AG04449 (cell line): ENCODE measurements at regions of chr11 and their contacts with region 1.

Region 1: GRCh38 chr11:114348200-114349191 is 51.8 kb downstream of the C11orf71 start:
- DNase-seq: no peak
- H3K4me3 ChIP-seq: no peak overlapping the region
- CTCF ChIP-seq: peak; percentile 39

Region 2: GRCh38 chr11:114362326-114362725 is 13.8 kb after region 1 on chr11:
- CTCF ChIA-PET with region 1: interaction called, 19 read pairs
- POLR2A ChIA-PET with region 1: no interaction called
- DNase-seq: no peak
- H3K4me3 ChIP-seq: no peak overlapping the region
- CTCF ChIP-seq: no peak

Region 3: DNA sequence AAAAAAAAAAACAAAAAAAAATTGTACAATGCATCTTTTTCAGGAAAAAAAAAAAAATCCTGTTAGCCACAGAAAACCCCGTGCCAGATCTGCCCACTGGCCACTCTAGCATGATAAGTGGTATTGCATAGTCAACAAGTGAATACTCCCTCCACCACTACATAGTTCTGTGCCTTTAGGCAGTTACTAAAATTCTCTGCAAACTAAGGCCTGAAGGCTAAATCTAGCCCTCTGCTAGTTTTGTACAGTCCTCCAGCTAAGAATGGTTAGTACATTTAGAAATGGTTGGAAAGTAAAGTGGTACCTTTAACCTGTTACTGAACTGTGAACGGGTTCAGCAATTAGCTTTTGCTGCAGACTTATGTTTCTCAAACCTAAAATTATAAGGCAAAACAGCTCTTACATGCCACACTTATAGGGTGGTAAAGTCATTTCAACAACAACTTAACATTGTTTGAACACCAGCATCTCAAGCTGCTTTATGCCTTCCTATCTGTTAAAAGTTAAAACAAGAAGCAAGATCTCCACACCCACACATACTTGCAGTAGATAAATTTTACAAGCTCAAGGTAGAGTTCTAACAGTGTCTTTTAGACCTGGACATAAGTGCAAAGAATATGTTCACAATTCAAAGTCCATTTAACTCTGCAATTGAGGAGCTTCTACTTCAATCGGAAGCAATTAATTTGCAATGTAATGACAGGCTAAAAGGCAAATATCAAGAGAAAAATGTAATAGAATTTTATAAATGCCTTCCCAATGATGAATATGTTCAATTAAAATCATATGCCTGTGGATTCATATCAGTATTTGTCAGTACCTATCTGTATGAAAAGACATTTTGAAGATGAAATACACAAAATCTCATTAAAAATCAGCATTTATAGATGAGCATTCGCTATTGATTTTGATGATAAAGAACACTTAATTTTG is 44.5 kb after region 1 on chr11:
- CTCF ChIA-PET with region 1: interaction called, 10 read pairs
- POLR2A ChIA-PET with region 1: no interaction called
- DNase-seq: no peak
- H3K4me3 ChIP-seq: no peak overlapping the region
- CTCF ChIP-seq: no peak

Region 4: DNA sequence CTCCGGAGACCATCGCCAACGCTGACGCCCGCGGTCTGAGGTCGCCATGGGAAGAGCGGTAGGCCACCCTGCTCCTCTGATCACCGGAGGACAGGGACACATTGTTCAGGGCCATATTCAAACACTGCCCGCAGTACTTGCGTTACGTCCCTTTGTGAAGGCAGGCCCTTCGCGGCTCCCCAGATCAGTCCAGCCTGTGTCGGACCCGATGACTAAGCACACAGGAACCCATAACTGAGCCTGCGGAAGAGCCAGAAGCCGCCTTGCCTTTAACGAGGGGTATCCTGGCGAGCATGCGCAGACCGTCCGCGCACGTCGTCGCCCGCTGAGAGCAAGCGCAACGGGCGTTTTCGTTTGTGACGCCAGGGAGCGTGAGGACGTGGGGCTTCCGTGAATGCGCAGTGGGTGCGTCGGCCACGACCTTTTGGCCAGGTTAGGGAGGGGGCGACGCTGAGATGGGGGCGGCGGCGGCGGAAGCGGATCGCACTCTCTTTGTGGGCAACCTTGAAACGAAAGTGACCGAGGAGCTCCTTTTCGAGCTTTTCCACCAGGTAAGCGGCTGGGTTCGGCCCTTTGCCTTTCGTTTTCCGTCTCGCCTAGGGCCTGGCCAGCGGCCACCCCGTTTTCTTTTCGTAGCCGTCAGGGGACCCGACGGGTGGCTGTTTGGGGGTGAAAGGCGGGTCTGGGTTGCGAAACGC is 51.9 kb after region 1 on chr11 and contains the starts of genes C11orf71 and RBM7:
- CTCF ChIA-PET with region 1: interaction called, 22 read pairs
- POLR2A ChIA-PET with region 1: no interaction called
- DNase-seq: peak; percentile 95
- H3K4me3 ChIP-seq: peak within 1 kb of the TSS; percentile 70
- CTCF ChIP-seq: no peak

Region 5: GRCh38 chr11:114416441-114416961 is 68.0 kb after region 1 on chr11:
- CTCF ChIA-PET with region 1: interaction called, 19 read pairs
- POLR2A ChIA-PET with region 1: no interaction called
- DNase-seq: no peak
- H3K4me3 ChIP-seq: no peak overlapping the region
- CTCF ChIP-seq: no peak